SK-N-SH (cell line): ENCODE measurements at regions of chr3 and their contacts with region 1.

Region 1: GRCh38 chr3:170908235-170909116 is at the start of gene EIF5A2:
- DNase-seq: peak; percentile 99
- H3K4me3 ChIP-seq: peak within 1 kb of the TSS; percentile 83 to 85
- H3K27ac ChIP-seq: peak within 1 kb of the TSS; percentile 73 to 86
- H3K4me1 ChIP-seq: peaks cover 9 to 17% of the 10 kb centered on the region in 2 experiments; a peak in 3 of 4 replicates
- H3K27me3 ChIP-seq: no peaks in the 10 kb centered on the region
- CTCF ChIP-seq: no peak
- EP300 ChIP-seq: no peak
- RAD21 ChIP-seq: no peak
- polyA plus RNA-seq, gene EIF5A2: 2.7 and 4.0 TPM in 2 replicates

Region 2: GRCh38 chr3:170835336-170835735 is 73.1 kb before region 1 on chr3:
- CTCF ChIA-PET with region 1: no interaction called
- POLR2A ChIA-PET with region 1: no interaction called
- DNase-seq: peak; percentile 61
- H3K4me3 ChIP-seq: no peak overlapping the region
- H3K27ac ChIP-seq: no peak overlapping the region
- H3K4me1 ChIP-seq: peaks cover 0 to 3% of the 10 kb centered on the region in 2 experiments; a peak in 2 of 4 replicates
- H3K27me3 ChIP-seq: no peaks in the 10 kb centered on the region
- CTCF ChIP-seq: no peak
- EP300 ChIP-seq: no peak
- RAD21 ChIP-seq: no peak

Region 3: DNA sequence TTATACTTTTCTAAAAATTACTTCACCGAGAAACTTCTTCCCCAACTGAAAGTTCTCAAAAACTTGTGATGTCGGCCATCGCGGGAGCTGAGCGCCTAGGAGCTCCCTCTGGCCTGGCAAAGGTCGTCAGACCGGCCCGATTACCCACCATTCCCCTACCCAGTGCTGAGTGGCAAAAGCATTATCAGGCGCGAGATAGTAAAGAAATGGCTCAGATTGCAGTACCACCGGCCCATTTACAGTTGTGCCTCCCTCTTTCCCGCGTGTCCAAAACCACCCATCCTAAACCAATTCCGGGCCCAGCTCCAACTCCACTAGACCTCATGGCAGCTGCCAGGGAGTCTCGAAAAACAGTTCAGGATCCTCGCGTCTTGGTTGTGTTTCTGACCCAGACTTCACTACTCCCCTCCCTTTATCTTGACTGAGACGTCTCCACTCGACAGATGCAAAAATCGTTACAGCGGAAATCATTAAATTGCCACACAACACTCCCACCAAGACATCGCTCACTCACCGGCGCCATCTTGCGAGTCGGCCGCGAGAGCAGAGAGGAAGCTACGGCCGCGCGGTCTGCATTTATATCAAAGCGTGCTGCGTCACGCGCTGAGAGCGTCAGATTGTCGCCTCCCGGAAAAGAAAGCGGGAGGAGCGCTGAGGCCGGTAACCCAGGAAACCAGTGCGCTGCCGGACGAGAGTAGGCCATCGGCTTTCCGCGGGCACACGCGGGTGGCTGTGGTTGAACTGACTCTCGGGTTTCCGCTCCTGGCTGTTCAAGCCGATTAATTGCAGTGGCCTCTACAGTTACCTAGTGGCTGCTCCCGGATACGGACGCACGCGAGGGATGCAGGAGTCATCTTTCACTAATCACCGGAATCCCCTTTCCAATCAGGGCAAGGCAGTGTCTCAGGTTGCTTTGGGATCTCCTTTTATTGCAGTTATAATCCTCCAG is 38.6 kb before region 1 on chr3 and contains the start of gene RPL22L1:
- CTCF ChIA-PET with region 1: no interaction called
- POLR2A ChIA-PET with region 1: interaction called, 17 read pairs
- DNase-seq: peak; percentile 87
- H3K4me3 ChIP-seq: peak within 1 kb of the TSS; percentile 73 to 81
- H3K27ac ChIP-seq: peak within 1 kb of the TSS; percentile 86 to 95
- H3K4me1 ChIP-seq: peaks cover 11 to 19% of the 10 kb centered on the region in 2 experiments; a peak in 3 of 4 replicates
- H3K27me3 ChIP-seq: no peaks in the 10 kb centered on the region
- CTCF ChIP-seq: no peak; the same call in 1 of the 2 replicates
- EP300 ChIP-seq: no peak
- RAD21 ChIP-seq: peak; percentile 5; the same call in 1 of the 2 replicates
- polyA plus RNA-seq, gene RPL22L1: 80.9 and 138 TPM in 2 replicates

Region 4: DNA sequence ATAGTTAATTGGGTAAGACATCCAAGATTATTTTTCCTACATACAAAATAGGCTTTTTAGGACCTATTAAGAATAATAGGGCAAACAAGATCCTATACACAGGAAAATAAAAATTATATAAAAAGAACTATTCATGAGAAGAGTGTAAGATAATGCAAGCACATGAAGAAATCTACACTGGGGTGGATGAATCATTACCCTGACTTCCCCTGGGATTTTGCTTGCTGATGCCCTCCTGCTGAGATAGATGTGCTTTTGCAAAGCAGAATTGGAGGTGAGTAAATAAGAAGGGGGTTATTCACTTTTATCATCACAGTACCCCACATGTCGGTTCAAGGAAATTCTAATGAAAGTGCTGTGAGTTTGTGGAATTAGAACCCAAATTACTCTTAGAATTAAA is 69.4 kb after region 1 on chr3:
- CTCF ChIA-PET with region 1: no interaction called
- POLR2A ChIA-PET with region 1: no interaction called
- DNase-seq: no peak
- H3K4me3 ChIP-seq: no peak overlapping the region
- H3K27ac ChIP-seq: no peak overlapping the region
- H3K4me1 ChIP-seq: no peaks in the 10 kb centered on the region
- H3K27me3 ChIP-seq: no peaks in the 10 kb centered on the region
- CTCF ChIP-seq: no peak
- EP300 ChIP-seq: no peak
- RAD21 ChIP-seq: no peak